ENCODE measurements at regions of chr19 and their contacts with region 1.

Region 1: DNA sequence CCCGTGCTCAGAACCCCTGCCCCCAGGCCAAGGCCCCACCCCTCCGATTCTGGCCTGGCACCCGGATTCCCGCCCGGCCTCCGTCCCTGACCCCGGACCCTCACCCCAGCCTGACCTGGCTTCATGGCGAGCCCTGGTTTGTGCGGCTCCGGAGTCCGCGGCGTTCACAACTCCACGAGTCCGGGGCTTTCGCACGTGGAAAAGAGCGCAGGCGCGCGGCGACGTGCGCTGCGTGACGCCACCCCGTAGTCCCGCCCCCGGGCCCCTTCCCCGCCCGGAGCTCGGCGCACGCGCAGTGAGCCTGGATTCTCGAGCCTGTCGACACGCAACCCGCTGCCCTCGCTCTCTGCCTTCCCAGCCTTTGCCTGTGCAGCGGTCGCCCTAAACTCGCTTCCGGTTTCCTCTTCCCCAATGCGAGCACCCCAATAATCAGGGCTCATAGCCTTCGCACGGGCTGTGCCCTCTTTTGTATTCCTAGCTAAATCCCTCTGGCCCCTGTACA is at the start of gene FBL:
- DNase-seq: peak; percentile 92
- H3K4me3 ChIP-seq: peak within 1 kb of the TSS; percentile 71 to 84 (median 76)
- H3K27ac ChIP-seq: peak within 1 kb of the TSS; percentile 64
- H3K4me1 ChIP-seq: peaks cover 24% of the 10 kb centered on the region
- H3K27me3 ChIP-seq: no peaks in the 10 kb centered on the region
- CTCF ChIP-seq: no peak
- POLR2A ChIP-seq: peak; percentile 78
- total RNA-seq, gene FBL: 271 and 277 TPM in 2 replicates

Region 2: GRCh38 chr19:39765091-39766076 is 80.8 kb before region 1 on chr19:
- CTCF ChIA-PET with region 1: interaction called, 31 read pairs
- POLR2A ChIA-PET with region 1: no interaction called
- dilution Hi-C with region 1: no loop called
- intact Hi-C with region 1: loop called (anchors 1 kb)
- DNase-seq: peak; percentile 43
- H3K4me3 ChIP-seq: no peak overlapping the region
- H3K27ac ChIP-seq: no peak overlapping the region
- H3K4me1 ChIP-seq: no peaks in the 10 kb centered on the region
- H3K27me3 ChIP-seq: no peaks in the 10 kb centered on the region
- CTCF ChIP-seq: peak; percentile 80 to 82
- POLR2A ChIP-seq: no peak

Region 3: GRCh38 chr19:39824143-39825092 is 21.8 kb before region 1 on chr19:
- CTCF ChIA-PET with region 1: interaction called, 6 read pairs
- POLR2A ChIA-PET with region 1: no interaction called
- dilution Hi-C with region 1: no loop called
- intact Hi-C with region 1: loop called (anchors 1 kb)
- DNase-seq: peak; percentile 94
- H3K4me3 ChIP-seq: peak overlapping the region; percentile 27 to 75 (median 72)
- H3K27ac ChIP-seq: no peak overlapping the region
- H3K4me1 ChIP-seq: peaks cover 11% of the 10 kb centered on the region
- H3K27me3 ChIP-seq: no peaks in the 10 kb centered on the region
- CTCF ChIP-seq: no peak
- POLR2A ChIP-seq: peak; percentile 67

Region 4: GRCh38 chr19:39833464-39834286 is 12.6 kb before region 1 on chr19 and contains the start of gene DYRK1B:
- CTCF ChIA-PET with region 1: interaction called, 31 read pairs
- POLR2A ChIA-PET with region 1: interaction called, 4 read pairs
- dilution Hi-C with region 1: no loop called
- intact Hi-C with region 1: loop called (anchors 1 kb)
- DNase-seq: peak; percentile 97
- H3K4me3 ChIP-seq: peak within 1 kb of the TSS; percentile 55 to 93 (median 66)
- H3K27ac ChIP-seq: peak within 1 kb of the TSS; percentile 77
- H3K4me1 ChIP-seq: peaks cover 8% of the 10 kb centered on the region
- H3K27me3 ChIP-seq: no peaks in the 10 kb centered on the region
- CTCF ChIP-seq: no peak
- POLR2A ChIP-seq: peak; percentile 41
- total RNA-seq, gene DYRK1B: 26.8 and 30.8 TPM in 2 replicates

Region 5: GRCh38 chr19:39878398-39878797 is 32.2 kb after region 1 on chr19:
- CTCF ChIA-PET with region 1: no interaction called
- POLR2A ChIA-PET with region 1: no interaction called
- dilution Hi-C with region 1: no loop called
- intact Hi-C with region 1: no loop called
- DNase-seq: no peak
- H3K4me3 ChIP-seq: no peak overlapping the region
- H3K27ac ChIP-seq: no peak overlapping the region
- H3K4me1 ChIP-seq: no peaks in the 10 kb centered on the region
- H3K27me3 ChIP-seq: no peaks in the 10 kb centered on the region
- CTCF ChIP-seq: no peak
- POLR2A ChIP-seq: no peak

Measured in endothelial cell of umbilical vein (primary cell).